IMR-90 (cell line): ENCODE measurements at regions of chr20 and their contacts with region 1.

Region 1: DNA sequence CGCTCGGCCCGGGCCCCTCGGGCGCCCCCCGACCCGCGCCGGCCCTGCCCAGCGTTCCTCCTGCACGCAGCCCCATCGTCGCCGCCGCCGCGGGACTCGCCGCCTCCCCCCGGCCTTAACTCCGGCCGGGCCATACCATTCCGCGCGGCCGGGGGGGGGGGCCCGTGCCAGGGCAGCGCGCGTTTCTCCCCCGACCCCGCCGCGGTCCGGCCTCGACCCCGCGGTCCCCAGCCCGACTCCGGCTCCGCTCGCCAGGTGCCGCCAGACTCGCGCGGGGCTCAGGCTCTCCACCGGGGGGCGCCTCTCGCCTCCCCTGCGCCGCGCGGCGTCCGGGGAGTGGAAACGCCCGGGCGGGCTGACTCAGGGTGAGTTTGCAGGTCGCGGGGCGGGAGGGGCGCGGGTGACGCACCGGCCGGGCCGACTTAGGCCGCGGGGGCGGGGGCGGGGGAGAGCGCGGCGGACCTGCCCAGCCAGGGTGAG is at the start of gene SRXN1:
- DNase-seq: peak; percentile 93
- ATAC-seq: peak; percentile 94
- H3K4me3 ChIP-seq: peak within 1 kb of the TSS; percentile 79
- H3K27ac ChIP-seq: peak within 1 kb of the TSS; percentile 90
- H3K4me1 ChIP-seq: peaks cover 12% of the 10 kb centered on the region
- H3K27me3 ChIP-seq: peaks cover 3% of the 10 kb centered on the region; the same call in 1 of the 2 replicates
- CTCF ChIP-seq: peak; percentile 76
- POLR2A ChIP-seq: peak; percentile 89
- RAD21 ChIP-seq: peak; percentile 51
- total RNA-seq, gene SRXN1: 63.0 and 71.2 TPM in 2 replicates

Region 2: GRCh38 chr20:496126-496696 is 156.9 kb before region 1 on chr20:
- CTCF ChIA-PET with region 1: no interaction called
- POLR2A ChIA-PET with region 1: no interaction called
- dilution Hi-C with region 1: no loop called
- in situ Hi-C with region 1: loop called (anchors 10 kb)
- intact Hi-C with region 1: no loop called
- DNase-seq: peak; percentile 49
- ATAC-seq: peak; percentile 61
- H3K4me3 ChIP-seq: no peak overlapping the region
- H3K27ac ChIP-seq: no peak overlapping the region; the same call in 1 of the 2 replicates
- H3K4me1 ChIP-seq: no peaks in the 10 kb centered on the region
- H3K27me3 ChIP-seq: no peaks in the 10 kb centered on the region
- CTCF ChIP-seq: no peak
- POLR2A ChIP-seq: no peak
- RAD21 ChIP-seq: no peak

Region 3: GRCh38 chr20:543369-544152 is 109.6 kb before region 1 on chr20 and contains the start of gene CSNK2A1:
- CTCF ChIA-PET with region 1: no interaction called
- POLR2A ChIA-PET with region 1: no interaction called
- dilution Hi-C with region 1: no loop called
- in situ Hi-C with region 1: loop called (anchors 10 kb)
- intact Hi-C with region 1: no loop called
- DNase-seq: peak; percentile 94
- ATAC-seq: peak; percentile 94
- H3K4me3 ChIP-seq: peak within 1 kb of the TSS; percentile 92
- H3K27ac ChIP-seq: peak within 1 kb of the TSS; percentile 91
- H3K4me1 ChIP-seq: no peaks in the 10 kb centered on the region; the same call in 1 of the 2 replicates
- H3K27me3 ChIP-seq: peaks cover 6% of the 10 kb centered on the region
- CTCF ChIP-seq: no peak
- POLR2A ChIP-seq: peak; percentile 91
- RAD21 ChIP-seq: no peak
- total RNA-seq, gene CSNK2A1: 151 and 193 TPM in 2 replicates

Region 4: GRCh38 chr20:728248-728944 is 75.2 kb after region 1 on chr20:
- CTCF ChIA-PET with region 1: no interaction called
- POLR2A ChIA-PET with region 1: no interaction called
- dilution Hi-C with region 1: no loop called
- in situ Hi-C with region 1: no loop called
- intact Hi-C with region 1: loop called (anchors 5 kb)
- DNase-seq: peak; percentile 18
- ATAC-seq: peak; percentile 91
- H3K4me3 ChIP-seq: peak overlapping the region; percentile 15; the same call in 1 of the 2 replicates
- H3K27ac ChIP-seq: no peak overlapping the region
- H3K4me1 ChIP-seq: no peaks in the 10 kb centered on the region
- H3K27me3 ChIP-seq: peaks cover 43% of the 10 kb centered on the region
- CTCF ChIP-seq: peak; percentile 63
- POLR2A ChIP-seq: no peak
- RAD21 ChIP-seq: peak; percentile 65